WTC11 (cell line): ENCODE measurements at regions of chr1 and their contacts with region 1.

Region 1: DNA sequence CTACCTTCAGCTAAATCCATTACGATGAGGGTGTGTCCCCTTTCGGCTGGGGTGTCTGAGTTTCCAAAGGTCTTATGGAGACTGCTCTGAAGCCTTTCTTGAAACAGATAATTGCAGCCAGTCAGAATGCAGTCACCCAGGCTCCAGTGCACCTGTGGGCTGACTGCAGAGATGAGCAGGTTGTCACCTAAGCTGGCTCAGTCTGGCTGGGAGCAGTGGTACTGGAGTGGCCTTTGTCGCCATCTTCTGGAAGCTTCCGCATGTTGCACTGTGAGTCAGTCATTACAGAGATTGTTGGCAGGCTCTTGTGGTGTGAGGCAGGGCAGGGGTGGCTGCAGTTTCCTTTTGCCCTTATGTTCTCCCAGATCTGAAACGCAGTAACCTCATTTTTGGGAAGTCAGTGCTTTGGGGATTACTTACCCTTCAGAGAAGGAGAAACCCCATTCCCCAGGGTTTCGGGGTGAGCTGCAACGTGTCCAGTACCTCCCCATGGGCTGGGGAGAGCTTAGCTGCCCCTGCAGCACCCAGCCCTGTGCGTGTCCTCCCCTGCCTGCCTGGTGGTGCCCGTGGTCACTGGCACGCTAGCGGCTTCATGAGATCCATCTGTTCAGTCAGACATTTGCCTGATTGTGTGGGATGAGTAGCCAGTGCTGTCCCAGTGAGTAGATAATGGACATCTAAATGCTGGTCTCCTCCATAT is 48.0 kb downstream of the SMYD2 start:
- DNase-seq: peak; percentile 90
- ATAC-seq: peak; percentile 84
- H3K4me3 Mint-ChIP-seq: no peak overlapping the region
- H3K27ac Mint-ChIP-seq: no peak overlapping the region
- H3K4me1 Mint-ChIP-seq: peaks cover 15% of the 10 kb centered on the region
- H3K27me3 Mint-ChIP-seq: no peaks in the 10 kb centered on the region
- CTCF ChIP-seq: peak; percentile 85

Region 2: GRCh38 chr1:213821175-213821942 is 507.6 kb before region 1 on chr1:
- CTCF ChIA-PET with region 1: no interaction called
- POLR2A ChIA-PET with region 1: no interaction called
- DNase-seq: no peak
- ATAC-seq: no peak
- H3K4me3 Mint-ChIP-seq: no peak overlapping the region
- H3K27ac Mint-ChIP-seq: no peak overlapping the region
- H3K4me1 Mint-ChIP-seq: no peaks in the 10 kb centered on the region; the same call in 1 of the 2 replicates
- H3K27me3 Mint-ChIP-seq: no peaks in the 10 kb centered on the region
- CTCF ChIP-seq: no peak

Region 3: DNA sequence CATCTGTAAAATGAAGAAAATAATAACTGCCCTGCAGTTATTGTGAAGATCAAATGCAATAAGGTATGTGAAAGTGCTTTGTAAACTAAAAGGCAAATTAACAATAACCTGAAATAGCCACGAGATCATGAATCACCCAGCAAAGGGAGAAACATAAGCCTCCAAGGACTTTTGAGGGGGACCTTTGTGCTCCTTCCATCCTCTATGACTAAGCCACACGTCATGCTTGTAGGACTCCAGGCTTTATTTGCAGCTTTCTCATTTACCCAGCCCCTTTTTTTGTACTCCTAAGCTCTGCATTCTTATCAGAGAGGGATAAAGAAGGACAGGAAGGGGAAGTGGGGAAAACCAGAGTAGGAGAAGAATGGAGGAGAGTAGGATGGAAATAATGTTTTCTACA is 226.0 kb before region 1 on chr1:
- CTCF ChIA-PET with region 1: no interaction called
- POLR2A ChIA-PET with region 1: no interaction called
- DNase-seq: no peak
- ATAC-seq: no peak
- H3K4me3 Mint-ChIP-seq: no peak overlapping the region
- H3K27ac Mint-ChIP-seq: no peak overlapping the region
- H3K4me1 Mint-ChIP-seq: peaks cover 16% of the 10 kb centered on the region
- H3K27me3 Mint-ChIP-seq: no peaks in the 10 kb centered on the region; the same call in 1 of the 2 replicates
- CTCF ChIP-seq: no peak

Region 4: DNA sequence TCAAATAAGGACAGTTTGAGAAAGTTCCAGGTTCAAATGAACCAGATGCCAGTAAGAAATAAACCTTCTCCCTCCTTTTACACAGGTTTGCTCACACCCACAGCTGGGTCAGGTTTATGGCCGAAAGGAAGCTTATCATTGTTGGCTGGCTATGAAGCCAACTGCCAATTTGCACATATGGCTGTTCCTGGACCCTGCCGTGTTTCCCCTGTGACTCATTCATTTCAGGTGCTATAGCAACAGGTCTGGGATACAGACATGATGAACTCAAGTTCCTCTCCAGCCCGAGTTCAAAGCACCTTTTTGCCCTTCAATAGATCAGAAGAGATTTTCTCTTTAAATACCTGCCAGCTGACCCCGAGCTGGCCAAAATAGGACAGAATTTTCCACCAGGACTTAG is 182.4 kb before region 1 on chr1:
- CTCF ChIA-PET with region 1: no interaction called
- POLR2A ChIA-PET with region 1: no interaction called
- DNase-seq: no peak
- ATAC-seq: no peak
- H3K4me3 Mint-ChIP-seq: no peak overlapping the region
- H3K27ac Mint-ChIP-seq: no peak overlapping the region
- H3K4me1 Mint-ChIP-seq: peaks cover 23% of the 10 kb centered on the region
- H3K27me3 Mint-ChIP-seq: no peaks in the 10 kb centered on the region
- CTCF ChIP-seq: no peak

Region 5: DNA sequence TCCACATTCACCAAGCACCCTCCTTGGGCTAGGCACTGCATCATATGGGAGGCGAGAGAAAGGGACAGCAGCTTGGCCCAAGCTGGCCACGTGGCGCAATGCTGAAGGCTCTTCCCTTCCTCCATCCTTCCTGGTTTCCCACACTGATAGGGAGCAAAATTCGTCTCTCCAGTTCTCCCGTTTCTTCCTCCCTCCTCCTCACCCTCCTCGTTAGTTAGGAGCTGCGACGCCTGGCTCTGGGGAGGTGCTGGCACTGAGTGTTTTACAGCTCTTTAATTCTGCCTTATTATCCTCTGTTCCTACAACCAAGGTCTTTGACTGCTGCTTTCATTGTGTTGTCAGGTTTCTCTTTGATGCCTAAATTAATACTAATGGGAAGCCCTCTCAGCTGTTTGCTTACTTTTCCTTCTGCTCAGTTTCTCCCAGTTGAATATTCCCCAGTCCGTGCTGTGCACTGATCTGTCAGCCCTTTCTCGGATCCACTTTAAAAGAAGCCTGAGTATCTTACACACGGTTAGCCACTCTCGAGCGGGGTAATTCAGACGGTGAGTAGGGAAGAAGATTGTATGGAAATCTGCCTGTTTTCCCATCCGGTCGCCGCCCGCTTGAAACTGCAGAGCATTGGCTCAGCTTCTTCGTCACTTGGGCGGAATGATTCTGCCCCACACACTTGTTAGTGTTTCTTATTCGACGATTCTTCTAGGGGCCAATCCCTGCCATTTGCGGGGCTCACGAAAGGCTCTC is 104.1 kb before region 1 on chr1:
- CTCF ChIA-PET with region 1: interaction called, 41 read pairs
- POLR2A ChIA-PET with region 1: no interaction called
- DNase-seq: no peak
- ATAC-seq: peak; percentile 85
- H3K4me3 Mint-ChIP-seq: peak overlapping the region; percentile 63
- H3K27ac Mint-ChIP-seq: no peak overlapping the region
- H3K4me1 Mint-ChIP-seq: peaks cover 27% of the 10 kb centered on the region
- H3K27me3 Mint-ChIP-seq: peaks cover 27% of the 10 kb centered on the region
- CTCF ChIP-seq: no peak

Region 6: DNA sequence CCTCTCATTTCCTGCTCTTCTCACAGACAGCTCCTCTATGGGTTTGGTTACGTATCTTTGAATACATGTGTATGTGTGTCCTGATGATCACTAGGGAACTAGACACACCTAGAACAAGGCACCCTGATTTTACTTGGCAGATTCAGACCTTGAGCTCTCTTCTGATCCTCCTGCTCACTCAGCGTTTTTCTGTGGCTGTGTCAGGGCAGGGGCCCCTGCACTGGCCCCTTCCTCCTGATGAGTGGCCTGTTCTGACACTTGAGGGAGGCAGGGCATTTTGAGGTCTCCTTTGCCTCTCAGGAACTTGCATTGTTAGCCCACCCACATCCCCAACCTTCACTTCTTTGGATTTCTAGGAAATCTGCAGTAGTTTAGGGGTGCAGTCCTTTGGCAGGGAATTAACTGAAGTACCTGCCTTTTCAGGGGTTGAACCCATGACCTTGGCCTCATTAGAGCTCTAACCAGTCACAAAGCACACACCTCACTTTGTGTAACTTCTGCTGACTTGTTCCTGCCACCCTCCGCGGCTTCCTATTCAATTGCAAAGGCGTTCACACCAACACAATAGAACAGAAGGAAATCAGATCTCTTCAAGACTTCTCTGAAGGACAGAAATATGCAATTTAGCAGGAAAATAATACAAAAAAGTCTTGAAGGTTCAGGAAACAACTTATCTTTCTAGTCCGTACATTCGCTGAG is 39.2 kb before region 1 on chr1:
- CTCF ChIA-PET with region 1: interaction called, 20 read pairs
- POLR2A ChIA-PET with region 1: interaction called, 3 read pairs
- DNase-seq: peak; percentile 60
- ATAC-seq: peak; percentile 98
- H3K4me3 Mint-ChIP-seq: peak overlapping the region; percentile 56
- H3K27ac Mint-ChIP-seq: no peak overlapping the region
- H3K4me1 Mint-ChIP-seq: peaks cover 54% of the 10 kb centered on the region
- H3K27me3 Mint-ChIP-seq: peaks cover 78% of the 10 kb centered on the region
- CTCF ChIP-seq: no peak

Region 7: GRCh38 chr1:214349781-214350180 is 20.9 kb after region 1 on chr1:
- CTCF ChIA-PET with region 1: interaction called, 46 read pairs
- POLR2A ChIA-PET with region 1: no interaction called
- DNase-seq: peak; percentile 42
- ATAC-seq: peak; percentile 81
- H3K4me3 Mint-ChIP-seq: no peak overlapping the region
- H3K27ac Mint-ChIP-seq: peak overlapping the region; percentile 97
- H3K4me1 Mint-ChIP-seq: peaks cover 22% of the 10 kb centered on the region
- H3K27me3 Mint-ChIP-seq: no peaks in the 10 kb centered on the region
- CTCF ChIP-seq: no peak

Region 8: DNA sequence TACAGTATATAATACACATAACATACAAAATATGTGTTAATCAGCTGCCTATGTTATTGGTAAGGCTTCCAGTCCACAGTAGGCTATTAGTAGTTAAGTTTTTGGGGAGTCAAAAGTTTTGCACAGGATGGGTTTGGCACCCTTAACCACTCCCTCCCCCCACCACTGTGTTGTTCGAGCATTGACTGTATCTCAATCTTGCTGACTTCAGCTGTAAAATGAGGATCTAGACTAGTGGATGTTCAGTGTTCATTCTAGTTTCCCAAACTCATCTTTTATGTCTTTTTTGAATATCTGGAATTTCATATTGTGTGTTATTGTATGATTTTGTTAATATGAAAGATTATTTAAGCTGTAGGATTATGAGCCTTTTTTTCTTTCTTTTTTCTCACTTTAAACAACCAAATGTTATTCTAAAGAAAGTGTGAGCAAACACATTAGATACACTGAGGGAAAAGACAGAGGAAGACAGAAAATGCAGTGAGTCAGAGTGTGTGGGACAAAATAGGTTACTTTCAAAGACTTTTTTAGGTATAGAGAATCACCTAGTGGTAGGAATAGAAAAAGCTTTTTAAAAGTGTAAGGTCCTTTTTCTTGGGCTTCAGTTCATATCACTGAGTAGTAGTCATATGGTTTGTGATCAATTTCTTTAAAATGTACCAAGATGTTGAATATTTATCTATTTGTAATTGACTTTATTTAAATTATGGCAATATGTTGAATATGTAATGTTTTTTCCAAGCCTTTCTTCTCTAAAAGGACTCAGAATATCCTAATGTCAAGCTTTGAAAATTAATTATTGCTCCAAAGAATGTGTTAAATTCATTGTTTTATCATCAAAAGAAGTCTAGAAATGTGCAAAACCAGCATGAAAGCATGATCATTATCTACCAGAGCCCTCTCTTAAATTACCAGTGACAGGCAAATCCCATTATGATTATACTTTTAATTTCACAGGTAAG is 256.2 kb after region 1 on chr1:
- CTCF ChIA-PET with region 1: interaction called, 122 read pairs
- POLR2A ChIA-PET with region 1: interaction called, 3 read pairs
- DNase-seq: no peak
- ATAC-seq: peak; percentile 62
- H3K4me3 Mint-ChIP-seq: no peak overlapping the region
- H3K27ac Mint-ChIP-seq: no peak overlapping the region
- H3K4me1 Mint-ChIP-seq: peaks cover 18% of the 10 kb centered on the region
- H3K27me3 Mint-ChIP-seq: no peaks in the 10 kb centered on the region
- CTCF ChIP-seq: peak; percentile 43

Region 9: GRCh38 chr1:214791961-214792360 is 463.0 kb after region 1 on chr1:
- CTCF ChIA-PET with region 1: no interaction called
- POLR2A ChIA-PET with region 1: no interaction called
- DNase-seq: no peak
- ATAC-seq: peak; percentile 16; the same call in 1 of the 2 replicates
- H3K4me3 Mint-ChIP-seq: no peak overlapping the region
- H3K27ac Mint-ChIP-seq: no peak overlapping the region
- H3K4me1 Mint-ChIP-seq: peaks cover 10% of the 10 kb centered on the region
- H3K27me3 Mint-ChIP-seq: no peaks in the 10 kb centered on the region
- CTCF ChIP-seq: no peak